ENCODE measurements at regions of chr5 and their contacts with region 1.

Region 1: DNA sequence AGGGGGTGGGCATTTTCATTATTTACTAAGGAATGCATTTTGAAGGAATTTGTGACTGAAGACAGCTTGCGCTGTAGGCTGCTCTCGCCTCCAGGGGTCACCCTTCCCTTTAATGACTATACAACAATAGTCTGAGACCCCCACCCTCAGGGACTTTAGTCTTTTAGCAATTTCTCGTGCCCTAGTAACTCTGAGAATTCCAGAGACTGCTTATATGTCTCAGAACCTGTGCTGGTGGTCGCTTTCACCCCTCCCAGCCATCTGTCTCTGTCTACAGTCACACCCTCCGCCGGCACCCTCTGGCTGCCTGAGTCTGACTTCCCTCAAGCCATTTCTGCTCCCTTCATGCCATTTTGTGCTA is 671.4 kb downstream of the NR2F1-AS1 start:
- DNase-seq: peak; percentile 14
- H3K4me3 ChIP-seq: no peak overlapping the region
- H3K27ac ChIP-seq: no peak overlapping the region
- H3K4me1 ChIP-seq: peaks cover 2 to 4% of the 10 kb centered on the region in 2 experiments; a peak in 3 of 4 replicates
- H3K27me3 ChIP-seq: no peaks in the 10 kb centered on the region
- CTCF ChIP-seq: peak; percentile 68
- EP300 ChIP-seq: no peak
- RAD21 ChIP-seq: peak; percentile 68

Region 2: GRCh38 chr5:92922231-92922967 is 12.8 kb after region 1 on chr5:
- CTCF ChIA-PET with region 1: interaction called, 11 read pairs
- POLR2A ChIA-PET with region 1: no interaction called
- DNase-seq: no peak
- H3K4me3 ChIP-seq: no peak overlapping the region
- H3K27ac ChIP-seq: no peak overlapping the region
- H3K4me1 ChIP-seq: no peaks in the 10 kb centered on the region; a peak in 1 of 4 replicates
- H3K27me3 ChIP-seq: no peaks in the 10 kb centered on the region
- CTCF ChIP-seq: no peak
- EP300 ChIP-seq: no peak
- RAD21 ChIP-seq: no peak

Measured in SK-N-SH (cell line).